Calu3 (cell line): ENCODE measurements at regions of chr2 and their contacts with region 1.

Region 1: GRCh38 chr2:209423562-209424198 is at the start of gene MAP2:
- DNase-seq: peak; percentile 95
- H3K4me3 Mint-ChIP-seq: peak within 1 kb of the TSS; percentile 94
- H3K27ac Mint-ChIP-seq: peak within 1 kb of the TSS; percentile 84
- H3K4me1 Mint-ChIP-seq: peaks cover 35% of the 10 kb centered on the region
- H3K27me3 Mint-ChIP-seq: no peaks in the 10 kb centered on the region
- CTCF ChIP-seq: peak; percentile 98
- total RNA-seq, gene MAP2: 9.5 and 11.2 TPM in 2 replicates

Region 2: GRCh38 chr2:209334198-209335017 is 89.3 kb before region 1 on chr2:
- CTCF ChIA-PET with region 1: interaction called, 51 read pairs
- intact Hi-C with region 1: loop called (anchors 1 kb)
- DNase-seq: peak; percentile 70
- H3K4me3 Mint-ChIP-seq: no peak overlapping the region
- H3K27ac Mint-ChIP-seq: no peak overlapping the region
- H3K4me1 Mint-ChIP-seq: no peaks in the 10 kb centered on the region
- H3K27me3 Mint-ChIP-seq: no peaks in the 10 kb centered on the region
- CTCF ChIP-seq: peak; percentile 82

Region 3: DNA sequence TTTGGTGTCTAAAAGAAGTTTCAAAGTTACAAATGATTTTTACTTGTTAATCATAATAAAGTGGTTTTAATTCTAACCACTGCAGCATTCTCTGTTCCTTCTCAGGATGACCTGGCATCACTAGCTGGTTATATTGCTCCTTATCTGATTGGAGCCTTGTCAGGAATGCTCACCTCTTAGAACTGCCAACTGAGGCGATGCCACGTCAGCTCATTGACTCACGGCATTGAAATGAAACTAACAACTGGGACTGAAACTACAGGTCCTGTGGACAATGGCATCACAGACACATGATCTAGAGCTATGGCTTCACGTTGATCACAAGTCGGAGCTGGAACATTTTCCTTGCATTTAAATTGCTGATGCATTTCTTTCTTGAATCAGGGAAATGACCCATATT is 54.8 kb before region 1 on chr2:
- CTCF ChIA-PET with region 1: interaction called, 5 read pairs
- intact Hi-C with region 1: loop called (anchors 2 kb)
- DNase-seq: peak; percentile 83
- H3K4me3 Mint-ChIP-seq: peak overlapping the region; percentile 31
- H3K27ac Mint-ChIP-seq: peak overlapping the region; percentile 77
- H3K4me1 Mint-ChIP-seq: peaks cover 31% of the 10 kb centered on the region
- H3K27me3 Mint-ChIP-seq: no peaks in the 10 kb centered on the region
- CTCF ChIP-seq: no peak

Region 4: DNA sequence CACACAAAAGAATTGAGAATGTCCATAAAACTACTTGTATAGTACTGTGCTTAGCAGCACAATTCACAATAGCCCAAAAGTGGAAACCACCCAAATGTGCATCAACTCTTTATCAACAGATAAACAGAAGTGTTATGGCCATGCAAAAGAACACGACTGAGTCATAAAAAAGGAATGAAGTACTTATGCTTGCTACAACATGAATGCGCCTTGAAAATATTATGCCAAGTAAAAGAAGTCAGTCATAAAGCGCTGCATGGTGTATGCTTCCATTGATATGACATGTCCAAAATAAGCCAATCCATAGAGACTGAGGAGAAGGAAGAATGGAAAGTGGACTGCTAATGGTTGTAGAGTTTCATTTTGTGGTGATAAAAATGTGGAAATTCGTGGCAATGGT is 12.0 kb before region 1 on chr2:
- CTCF ChIA-PET with region 1: no interaction called
- intact Hi-C with region 1: no loop called
- DNase-seq: no peak
- H3K4me3 Mint-ChIP-seq: no peak overlapping the region
- H3K27ac Mint-ChIP-seq: no peak overlapping the region
- H3K4me1 Mint-ChIP-seq: no peaks in the 10 kb centered on the region
- H3K27me3 Mint-ChIP-seq: no peaks in the 10 kb centered on the region
- CTCF ChIP-seq: no peak

Region 5: DNA sequence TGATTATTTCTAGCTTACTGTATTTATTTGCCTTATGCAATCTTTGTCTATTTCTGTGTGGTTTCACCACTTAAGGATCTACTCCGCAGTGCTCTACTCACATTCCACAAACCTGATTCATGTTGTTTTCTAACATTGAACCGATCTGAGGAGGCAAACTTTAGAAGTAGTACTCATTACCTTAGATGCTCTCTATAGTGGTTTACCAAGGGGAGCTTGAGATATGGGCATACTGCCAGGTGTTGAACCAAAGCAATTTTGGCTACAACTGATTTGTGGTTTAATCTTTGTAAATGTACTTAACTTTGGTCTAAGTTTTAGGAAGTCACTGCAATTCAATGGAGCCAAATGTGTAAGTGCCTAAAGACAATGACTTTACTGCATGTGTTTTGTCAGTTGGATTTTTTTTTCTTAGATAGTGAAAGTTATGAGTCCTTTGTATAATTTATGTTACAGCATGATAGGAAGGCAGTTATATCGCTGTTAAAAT is 50.3 kb after region 1 on chr2:
- CTCF ChIA-PET with region 1: interaction called, 5 read pairs
- intact Hi-C with region 1: loop called (anchors 5 kb)
- DNase-seq: peak; percentile 46
- H3K4me3 Mint-ChIP-seq: no peak overlapping the region
- H3K27ac Mint-ChIP-seq: peak overlapping the region; percentile 19
- H3K4me1 Mint-ChIP-seq: peaks cover 12% of the 10 kb centered on the region
- H3K27me3 Mint-ChIP-seq: no peaks in the 10 kb centered on the region
- CTCF ChIP-seq: no peak

Region 6: GRCh38 chr2:209495855-209496585 is 72.3 kb after region 1 on chr2:
- CTCF ChIA-PET with region 1: no interaction called
- intact Hi-C with region 1: loop called (anchors 1 kb)
- DNase-seq: peak; percentile 64
- H3K4me3 Mint-ChIP-seq: no peak overlapping the region
- H3K27ac Mint-ChIP-seq: peak overlapping the region; percentile 74
- H3K4me1 Mint-ChIP-seq: peaks cover 17% of the 10 kb centered on the region
- H3K27me3 Mint-ChIP-seq: no peaks in the 10 kb centered on the region
- CTCF ChIP-seq: no peak

Region 7: GRCh38 chr2:209556354-209556961 is 132.8 kb after region 1 on chr2:
- CTCF ChIA-PET with region 1: interaction called, 21 read pairs
- intact Hi-C with region 1: loop called (anchors 1 kb)
- DNase-seq: peak; percentile 22
- H3K4me3 Mint-ChIP-seq: no peak overlapping the region
- H3K27ac Mint-ChIP-seq: no peak overlapping the region
- H3K4me1 Mint-ChIP-seq: no peaks in the 10 kb centered on the region
- H3K27me3 Mint-ChIP-seq: no peaks in the 10 kb centered on the region
- CTCF ChIP-seq: peak; percentile 37

Region 8: GRCh38 chr2:209577376-209578357 is 154.0 kb after region 1 on chr2:
- CTCF ChIA-PET with region 1: interaction called, 6 read pairs
- intact Hi-C with region 1: loop called (anchors 1 kb)
- DNase-seq: peak; percentile 20
- H3K4me3 Mint-ChIP-seq: no peak overlapping the region
- H3K27ac Mint-ChIP-seq: no peak overlapping the region
- H3K4me1 Mint-ChIP-seq: no peaks in the 10 kb centered on the region
- H3K27me3 Mint-ChIP-seq: no peaks in the 10 kb centered on the region
- CTCF ChIP-seq: peak; percentile 32

Region 9: GRCh38 chr2:209661286-209661894 is 237.7 kb after region 1 on chr2:
- CTCF ChIA-PET with region 1: no interaction called
- intact Hi-C with region 1: no loop called
- DNase-seq: no peak
- H3K4me3 Mint-ChIP-seq: no peak overlapping the region
- H3K27ac Mint-ChIP-seq: no peak overlapping the region
- H3K4me1 Mint-ChIP-seq: peaks cover 8% of the 10 kb centered on the region
- H3K27me3 Mint-ChIP-seq: no peaks in the 10 kb centered on the region
- CTCF ChIP-seq: no peak